ENCODE measurements at regions of chr1 and their contacts with region 1.

Region 1: DNA sequence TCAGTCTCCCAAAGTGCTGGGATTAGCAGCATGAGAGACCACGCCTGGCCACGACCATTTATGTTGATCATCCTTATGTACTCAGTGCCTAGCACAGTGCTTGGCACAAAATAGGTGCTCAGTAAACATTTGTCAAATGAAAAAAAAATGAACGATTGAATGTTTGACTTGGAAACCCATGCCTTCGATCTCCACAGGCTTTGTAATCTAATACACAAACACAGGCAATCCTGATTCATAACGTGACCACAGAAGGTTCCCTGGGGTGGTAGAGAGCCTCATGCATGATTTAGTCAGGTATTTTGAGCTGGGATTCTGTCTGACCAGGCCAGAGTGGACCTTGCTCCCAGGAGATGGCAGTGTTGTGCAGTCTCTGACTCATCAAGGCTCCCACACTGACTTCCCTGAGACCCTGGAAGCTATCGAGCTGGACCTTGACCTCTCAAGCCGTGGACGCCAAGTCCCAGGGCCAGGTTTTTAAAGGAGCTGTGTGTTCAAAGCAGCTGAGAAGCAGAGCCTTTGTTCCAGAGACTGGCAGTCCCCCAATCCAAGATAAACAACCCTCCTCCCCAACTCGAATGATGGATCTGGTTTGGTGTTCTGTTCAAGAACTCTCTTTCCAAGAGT is 81.1 kb downstream of the PGM1 start:
- DNase-seq: peak; percentile 93 to 97 (median 96)
- ATAC-seq: peak; percentile 95
- H3K4me3 ChIP-seq: no peak overlapping the region
- H3K27ac ChIP-seq: peak overlapping the region; percentile 57 to 84 (median 70)
- H3K4me1 ChIP-seq: peaks cover 44% of the 10 kb centered on the region
- H3K27me3 ChIP-seq: no peaks in the 10 kb centered on the region
- CTCF ChIP-seq: peak; percentile 36 to 94 (median 89)
- POLR2A ChIP-seq: peak in 1 of 3 donors; percentile 12

Region 2: DNA sequence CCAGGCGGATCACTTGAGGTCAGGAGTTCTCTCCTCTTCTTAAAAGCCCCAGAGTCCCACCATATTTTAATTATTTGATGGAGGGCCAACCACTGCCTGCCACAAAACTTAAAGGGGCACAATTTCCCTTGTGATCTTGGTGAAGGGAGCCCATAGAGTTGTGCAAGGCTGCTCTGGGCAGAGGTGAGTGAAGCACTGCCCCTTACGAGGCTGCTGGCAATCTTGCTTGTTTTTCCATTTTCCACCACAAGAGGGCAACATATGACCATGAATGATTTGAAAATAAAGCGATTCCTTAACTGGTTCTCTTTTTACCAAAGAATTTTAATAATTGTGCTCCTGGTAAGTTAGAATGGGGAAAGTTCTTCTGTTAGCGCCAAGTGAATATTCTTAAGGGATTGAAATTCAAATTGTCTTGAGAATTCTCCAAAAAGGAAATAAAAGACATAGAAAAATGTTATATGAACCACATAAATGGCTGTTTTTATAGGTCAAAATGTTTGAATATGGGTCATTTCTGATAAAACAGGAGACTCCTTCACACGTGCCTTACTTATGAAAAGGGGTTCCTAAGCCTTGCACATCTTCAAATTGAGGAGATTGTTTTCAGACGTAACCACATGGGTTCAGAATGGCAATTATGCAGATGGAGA is 58.5 kb before region 1 on chr1:
- intact Hi-C with region 1: loop called (anchors 10 kb)
- DNase-seq: peak; percentile 74 to 79 (median 76)
- ATAC-seq: peak; percentile 82
- H3K4me3 ChIP-seq: no peak overlapping the region
- H3K27ac ChIP-seq: no peak overlapping the region
- H3K4me1 ChIP-seq: peaks cover 29% of the 10 kb centered on the region
- H3K27me3 ChIP-seq: no peaks in the 10 kb centered on the region
- CTCF ChIP-seq: peak; percentile 49 to 86 (median 81)
- POLR2A ChIP-seq: no peak

Region 3: DNA sequence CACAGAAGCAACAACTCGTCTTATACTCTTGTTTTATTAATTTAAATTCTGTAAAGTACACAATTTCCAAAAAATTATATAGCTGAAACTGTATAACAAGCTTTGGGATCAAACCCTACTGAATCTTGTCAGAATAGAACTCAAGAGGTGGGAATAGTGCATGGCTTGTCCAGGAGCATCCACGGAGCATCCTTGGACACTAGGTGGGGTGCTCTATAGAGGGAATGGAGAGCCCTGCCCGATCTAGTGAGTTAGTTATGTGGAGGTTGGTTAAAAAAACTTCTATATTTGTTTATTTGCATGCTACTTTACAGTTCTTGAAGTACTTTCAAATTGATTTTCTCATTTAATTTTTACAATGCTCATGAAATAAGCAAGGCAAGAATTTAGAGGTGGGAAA is 127.8 kb after region 1 on chr1:
- intact Hi-C with region 1: no loop called
- DNase-seq: no peak
- ATAC-seq: no peak
- H3K4me3 ChIP-seq: no peak overlapping the region
- H3K27ac ChIP-seq: no peak overlapping the region
- H3K4me1 ChIP-seq: peaks cover 13% of the 10 kb centered on the region
- H3K27me3 ChIP-seq: no peaks in the 10 kb centered on the region
- CTCF ChIP-seq: no peak
- POLR2A ChIP-seq: no peak

Region 4: GRCh38 chr1:64535938-64536835 is 861.8 kb after region 1 on chr1:
- intact Hi-C with region 1: no loop called
- DNase-seq: peak; percentile 20 to 51 (median 32)
- ATAC-seq: peak; percentile 30
- H3K4me3 ChIP-seq: no peak overlapping the region
- H3K27ac ChIP-seq: peak overlapping the region; percentile 18 to 78 (median 54)
- H3K4me1 ChIP-seq: peaks cover 50% of the 10 kb centered on the region
- H3K27me3 ChIP-seq: no peaks in the 10 kb centered on the region
- CTCF ChIP-seq: no peak
- POLR2A ChIP-seq: no peak